Left ventricle myocardium inferior (tissue), 1 donor: ENCODE measurements at regions of chr4 and their contacts with region 1.

Region 1: DNA sequence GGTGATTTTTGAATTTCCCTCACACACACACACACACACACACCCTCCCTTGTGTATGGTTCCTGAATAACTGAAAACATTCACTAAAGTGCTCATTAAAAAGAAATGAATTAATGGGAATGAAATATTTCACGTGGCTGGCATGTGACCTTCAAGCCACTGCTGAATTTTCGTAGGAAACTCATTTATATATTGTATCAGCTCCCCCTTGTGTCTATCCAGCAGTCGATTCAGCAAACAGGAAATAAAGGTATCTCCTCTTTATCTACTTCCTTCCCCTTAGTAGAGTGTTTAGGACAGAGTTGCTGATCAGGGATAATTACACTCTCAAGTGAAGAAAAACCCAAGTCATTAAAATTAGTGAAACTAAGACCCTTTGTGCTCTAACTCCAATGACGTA is 912.6 kb upstream of the LCORL start:
- DNase-seq: no peak
- H3K4me3 ChIP-seq: no peak overlapping the region
- H3K27ac ChIP-seq: no peak overlapping the region
- H3K4me1 ChIP-seq: peaks cover 6% of the 10 kb centered on the region
- H3K27me3 ChIP-seq: no peaks in the 10 kb centered on the region
- CTCF ChIP-seq: peak; percentile 51

Region 2: GRCh38 chr4:18689308-18690115 is 244.7 kb before region 1 on chr4:
- intact Hi-C with region 1: loop called (anchors 10 kb)
- DNase-seq: no peak
- H3K4me3 ChIP-seq: no peak overlapping the region
- H3K27ac ChIP-seq: no peak overlapping the region
- H3K4me1 ChIP-seq: peaks cover 12% of the 10 kb centered on the region
- H3K27me3 ChIP-seq: no peaks in the 10 kb centered on the region
- CTCF ChIP-seq: peak; percentile 88